A549 (cell line): ENCODE measurements at regions of chr7 and their contacts with region 1.

Region 1: DNA sequence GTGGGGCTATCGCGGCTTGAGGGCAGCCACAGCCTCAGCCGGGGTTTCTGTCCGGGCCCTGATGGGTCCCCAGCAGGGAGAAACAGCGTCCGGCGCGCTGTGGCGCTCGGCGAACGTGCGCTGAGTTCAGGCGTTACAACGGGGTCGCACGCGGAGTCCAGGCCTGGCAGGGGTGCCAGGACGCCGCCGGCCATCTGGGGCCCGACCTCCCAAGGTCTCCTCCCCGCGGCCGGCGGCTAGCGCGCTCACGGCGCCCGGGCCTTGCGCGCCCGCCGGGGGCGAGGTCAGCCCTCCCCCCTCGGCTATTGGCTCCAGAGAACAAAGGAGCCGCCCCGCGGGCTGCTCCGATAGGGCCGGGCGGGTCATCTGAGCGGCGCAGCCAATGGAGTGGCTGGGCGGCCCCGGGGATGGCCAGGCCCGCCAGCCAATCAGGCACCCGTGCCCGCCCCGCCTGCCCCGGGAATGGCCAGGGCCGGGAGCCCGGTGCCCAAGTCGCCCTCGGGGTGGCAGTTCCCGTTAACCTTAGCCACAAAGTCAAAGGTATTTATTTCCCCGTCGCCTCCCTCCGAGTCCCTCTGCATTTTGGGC is at the start of gene ZNF775:
- DNase-seq: peak; percentile 94 to 100
- ATAC-seq: peak; percentile 91 to 97
- H3K4me3 ChIP-seq: peak within 1 kb of the TSS; percentile 90
- H3K27ac ChIP-seq: peak within 1 kb of the TSS; percentile 97 to 100
- H3K4me1 ChIP-seq: peaks cover 37% of the 10 kb centered on the region
- CTCF ChIP-seq: no peak
- EP300 ChIP-seq: no peak
- POLR2A ChIP-seq: peak; percentile 87
- RAD21 ChIP-seq: no peak
- polyA plus RNA-seq, gene ZNF775: 1.5 and 1.7 TPM in 2 replicates

Region 2: DNA sequence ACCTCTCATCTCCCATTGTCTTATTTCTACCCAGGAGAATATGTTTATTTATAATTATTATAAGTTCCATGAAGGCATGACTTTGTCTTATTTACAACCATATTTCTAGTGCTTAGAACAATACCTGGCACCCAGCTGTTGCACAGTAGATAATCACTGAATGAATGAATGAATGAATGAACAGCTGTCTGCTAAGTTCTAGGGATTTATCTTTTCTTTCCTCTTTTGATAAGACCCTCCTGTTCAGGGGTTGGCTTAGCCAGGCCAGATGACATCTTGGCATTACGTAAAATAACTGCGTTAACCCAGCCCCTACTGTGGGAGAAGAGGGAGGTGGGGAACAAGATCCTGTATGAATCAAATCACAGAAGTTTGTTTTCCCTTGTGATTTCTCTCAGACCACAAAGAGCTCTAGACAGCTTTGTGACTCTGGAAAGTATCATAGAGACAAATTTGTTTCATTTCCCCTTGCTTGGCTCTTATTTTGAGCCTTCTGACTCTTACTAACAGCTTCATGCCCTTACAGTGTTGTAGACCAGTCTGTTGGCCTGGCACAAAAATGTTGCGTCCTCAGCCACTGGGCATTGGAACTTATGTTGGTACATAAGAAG is 532.4 kb before region 1 on chr7:
- CTCF ChIA-PET with region 1: no interaction called
- POLR2A ChIA-PET with region 1: no interaction called
- DNase-seq: no peak
- ATAC-seq: no peak
- H3K4me3 ChIP-seq: no peak overlapping the region
- H3K27ac ChIP-seq: no peak overlapping the region
- H3K4me1 ChIP-seq: no peaks in the 10 kb centered on the region
- CTCF ChIP-seq: no peak
- EP300 ChIP-seq: no peak
- POLR2A ChIP-seq: no peak
- RAD21 ChIP-seq: no peak

Region 3: DNA sequence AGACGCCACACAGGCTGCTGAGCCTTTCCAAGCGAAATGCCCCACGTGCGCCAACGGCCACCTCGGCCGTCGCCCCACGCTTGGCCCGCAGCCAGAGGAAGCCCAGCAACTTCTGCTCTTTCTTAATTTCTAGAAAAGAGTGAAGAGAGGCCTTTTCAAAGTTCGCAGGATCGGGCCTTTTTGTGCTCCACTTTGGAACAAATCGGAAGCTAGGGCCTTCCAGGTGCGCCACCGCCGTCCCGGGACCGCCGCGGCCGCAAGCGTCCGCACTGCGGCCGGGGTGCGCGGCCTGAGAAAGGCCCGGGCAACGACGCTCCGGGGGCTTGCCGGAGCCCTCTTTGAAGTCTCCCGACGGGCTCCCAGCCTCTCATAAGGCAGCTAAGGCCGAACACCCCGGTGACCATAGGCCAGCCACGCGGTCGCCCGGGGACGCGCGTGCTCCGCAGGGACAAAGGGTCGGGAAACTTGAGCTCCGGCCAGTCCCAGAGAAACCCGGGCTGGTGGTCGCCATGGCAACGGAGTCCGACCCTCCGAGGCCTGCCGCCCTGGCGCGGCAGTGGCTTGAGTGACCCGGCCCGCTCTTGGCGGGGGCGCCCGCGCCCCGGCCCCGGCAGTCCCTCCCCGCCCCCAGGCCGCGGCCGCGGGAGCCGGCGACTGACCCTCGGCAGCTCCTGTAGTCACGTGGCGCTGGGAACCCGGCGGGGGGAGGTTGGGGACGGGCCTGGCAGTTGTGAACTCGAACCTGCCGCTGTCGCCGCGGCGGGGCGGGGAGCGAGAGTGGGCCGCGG is 10.7 kb before region 1 on chr7 and contains the start of gene REPIN1:
- CTCF ChIA-PET with region 1: interaction called, 9 read pairs
- POLR2A ChIA-PET with region 1: interaction called, 44 read pairs
- DNase-seq: peak; percentile 72 to 93
- ATAC-seq: peak; percentile 69 to 70
- H3K4me3 ChIP-seq: peak within 1 kb of the TSS; percentile 96
- H3K27ac ChIP-seq: peak within 1 kb of the TSS; percentile 96 to 100
- H3K4me1 ChIP-seq: peaks cover 19% of the 10 kb centered on the region; the same call in 2 of the 3 replicates
- CTCF ChIP-seq: no peak
- EP300 ChIP-seq: no peak
- POLR2A ChIP-seq: peak; percentile 43
- RAD21 ChIP-seq: no peak
- polyA plus RNA-seq, gene REPIN1: 48.1 and 58.0 TPM in 2 replicates

Region 4: DNA sequence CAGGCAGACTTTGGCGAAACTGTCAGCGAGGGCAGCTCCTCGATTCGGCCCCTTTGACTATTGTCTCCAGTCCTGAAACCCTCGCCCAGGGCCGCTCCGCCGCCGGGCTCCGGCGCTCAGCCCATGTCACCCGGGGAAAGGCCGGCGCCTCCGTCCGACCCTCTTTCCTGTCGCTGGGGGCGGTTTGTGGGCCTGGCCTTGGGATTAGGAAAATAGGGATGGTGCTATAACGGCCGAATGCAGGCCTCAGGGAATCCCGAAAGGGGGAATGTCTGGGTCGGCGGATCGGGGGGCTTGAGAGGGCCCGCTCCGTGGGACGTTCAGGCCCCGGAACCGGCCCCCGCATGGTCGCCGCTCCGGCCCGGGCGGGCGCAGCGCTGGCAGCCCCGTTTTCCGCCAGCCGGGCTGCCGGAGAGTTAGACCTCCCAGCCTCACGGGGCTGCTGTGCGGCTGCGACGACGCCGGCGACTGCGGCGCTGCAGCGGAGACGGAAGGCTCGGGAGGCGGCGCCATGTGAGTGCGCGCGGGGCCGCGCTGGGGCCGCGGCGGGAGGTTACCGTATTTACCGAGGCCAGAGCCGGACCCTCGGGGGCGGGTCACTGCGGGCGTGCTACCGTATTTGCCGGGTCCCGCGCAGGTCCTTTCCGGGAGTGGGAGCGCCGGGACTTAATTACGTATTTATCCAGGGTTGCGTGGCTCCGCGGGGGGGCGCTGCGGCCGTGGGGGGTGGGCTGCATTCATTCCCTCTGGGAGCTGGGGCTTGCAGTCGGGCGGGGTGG is 26.0 kb after region 1 on chr7:
- CTCF ChIA-PET with region 1: interaction called, 4 read pairs
- POLR2A ChIA-PET with region 1: interaction called, 12 read pairs
- DNase-seq: peak; percentile 84 to 88
- ATAC-seq: peak; percentile 80 to 92
- H3K4me3 ChIP-seq: peak overlapping the region; percentile 69
- H3K27ac ChIP-seq: peak overlapping the region; percentile 92 to 97
- H3K4me1 ChIP-seq: peaks cover 39% of the 10 kb centered on the region
- CTCF ChIP-seq: peak; percentile 35; the same call in 2 of the 3 replicates
- EP300 ChIP-seq: no peak
- POLR2A ChIP-seq: peak; percentile 72
- RAD21 ChIP-seq: no peak; a peak in 2 of 5 replicates

Region 5: GRCh38 chr7:150420987-150421674 is 42.2 kb after region 1 on chr7:
- CTCF ChIA-PET with region 1: interaction called, 12 read pairs
- POLR2A ChIA-PET with region 1: no interaction called
- DNase-seq: peak; percentile 79 to 92
- ATAC-seq: peak; percentile 99 to 100
- H3K4me3 ChIP-seq: no peak overlapping the region
- H3K27ac ChIP-seq: 0 out of 6 replicates have a peak overlapping the region, but pooled peaks of 1 of the 2 experiments have one; percentile 43
- H3K4me1 ChIP-seq: peaks cover 5% of the 10 kb centered on the region; the same call in 1 of the 3 replicates
- CTCF ChIP-seq: peak; percentile 92
- EP300 ChIP-seq: no peak
- POLR2A ChIP-seq: no peak
- RAD21 ChIP-seq: peak; percentile 85 to 89

Region 6: GRCh38 chr7:150435390-150436073 is 56.6 kb after region 1 on chr7:
- CTCF ChIA-PET with region 1: no interaction called
- POLR2A ChIA-PET with region 1: no interaction called
- DNase-seq: no peak
- ATAC-seq: no peak
- H3K4me3 ChIP-seq: no peak overlapping the region
- H3K27ac ChIP-seq: no peak overlapping the region
- H3K4me1 ChIP-seq: no peaks in the 10 kb centered on the region
- CTCF ChIP-seq: no peak
- EP300 ChIP-seq: no peak
- POLR2A ChIP-seq: no peak
- RAD21 ChIP-seq: no peak